GM10248 (cell line): ENCODE measurements at regions of chr3 and their contacts with region 1.

Region 1: DNA sequence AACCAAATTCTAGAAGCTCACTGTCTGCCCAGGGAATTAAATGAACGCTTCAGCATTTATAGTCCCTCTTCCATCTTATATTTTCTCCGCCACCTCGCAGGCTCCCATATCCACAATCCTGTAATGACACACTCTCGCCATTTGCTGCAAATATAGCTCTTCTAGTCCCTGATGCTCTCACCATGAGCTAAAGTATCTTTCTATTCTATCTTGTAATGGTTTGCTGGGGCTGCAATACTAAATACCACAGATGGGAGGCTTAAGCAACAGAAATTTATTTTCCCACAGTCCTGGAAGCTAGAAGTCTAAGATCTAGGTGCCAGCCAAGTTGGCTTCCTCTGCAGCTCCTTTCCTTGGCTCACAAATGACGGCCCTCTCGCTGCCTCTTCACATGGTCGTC is 106.9 kb upstream of the NPHP3 start:
- DNase-seq: no peak
- CTCF ChIP-seq: no peak

Region 2: GRCh38 chr3:132847849-132848625 is 18.9 kb after region 1 on chr3:
- CTCF ChIA-PET with region 1: interaction called, 10 read pairs
- POLR2A ChIA-PET with region 1: no interaction called
- DNase-seq: no peak
- CTCF ChIP-seq: no peak

Region 3: DNA sequence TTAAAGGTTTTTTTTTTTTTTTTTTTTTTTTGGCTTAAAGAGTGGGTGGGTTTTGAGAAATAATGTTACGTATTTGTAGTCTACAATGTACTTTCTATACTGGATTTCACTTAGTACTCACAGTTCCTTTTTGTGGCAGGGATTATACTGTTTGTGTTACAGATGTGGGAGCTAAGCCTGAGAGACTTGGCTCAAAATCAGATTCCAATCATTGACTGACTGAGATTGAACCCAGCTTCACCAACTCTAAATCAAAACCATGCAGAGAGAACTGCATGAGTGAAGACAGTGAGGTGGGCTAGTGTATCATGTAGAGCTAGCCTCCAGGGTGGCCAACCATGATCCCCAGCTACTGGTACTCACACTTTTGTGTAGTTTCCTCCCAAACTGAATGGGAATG is 277.1 kb after region 1 on chr3:
- CTCF ChIA-PET with region 1: no interaction called
- POLR2A ChIA-PET with region 1: no interaction called
- DNase-seq: no peak
- CTCF ChIP-seq: no peak